Activated B cell treated with CpG ODN at 0.5 μM for 24 hours (primary cell): ENCODE measurements at regions of chr19 and their contacts with region 1.

Region 1: GRCh38 chr19:42529248-42529764 is 1.0 kb upstream of the CEACAM1 start:
- DNase-seq: peak; percentile 68
- ATAC-seq: peak; percentile 87
- H3K4me3 Mint-ChIP-seq: peak overlapping the region; percentile 70
- H3K27ac Mint-ChIP-seq: peak overlapping the region; percentile 80
- H3K4me1 Mint-ChIP-seq: peaks cover 34% of the 10 kb centered on the region
- H3K27me3 Mint-ChIP-seq: no peaks in the 10 kb centered on the region
- CTCF ChIP-seq: peak; percentile 63

Region 2: DNA sequence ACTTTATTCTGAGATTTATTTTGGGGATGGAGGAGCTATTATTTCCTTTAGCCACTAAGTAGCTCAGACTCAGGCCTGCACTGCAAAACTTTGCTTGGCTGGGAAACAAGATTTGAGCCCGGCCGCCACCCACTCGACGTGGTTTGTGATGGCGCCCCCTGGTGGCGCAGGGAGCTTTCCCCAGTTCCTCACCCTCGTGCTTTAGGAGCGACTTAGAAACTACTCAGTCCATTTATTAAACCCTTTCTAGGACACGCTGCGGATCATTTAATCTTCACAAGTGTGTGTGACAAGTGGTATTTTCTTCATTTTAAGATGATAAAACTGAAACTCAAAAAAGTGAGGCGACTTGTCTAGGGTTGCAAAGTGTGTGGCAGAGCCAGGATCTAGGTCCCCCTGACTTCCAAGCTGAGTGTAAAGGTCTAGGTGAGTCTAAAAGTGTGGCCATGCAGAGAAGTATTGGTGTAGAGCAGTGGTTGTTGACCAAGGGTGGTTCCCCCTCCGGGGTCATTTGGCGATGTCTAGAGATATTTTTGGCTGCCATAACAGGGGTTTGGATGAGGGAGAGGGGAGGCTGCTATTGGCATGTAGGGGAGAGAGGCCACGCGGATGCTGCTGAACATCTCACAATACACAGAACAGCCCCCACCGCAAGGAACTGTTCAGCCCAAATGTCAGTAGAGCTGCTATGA is 88.8 kb before region 1 on chr19:
- CTCF ChIA-PET with region 1: interaction called, 23 read pairs
- POLR2A ChIA-PET with region 1: no interaction called
- intact Hi-C with region 1: no loop called
- DNase-seq: peak; percentile 68
- ATAC-seq: peak; percentile 60
- H3K4me3 Mint-ChIP-seq: no peak overlapping the region
- H3K27ac Mint-ChIP-seq: no peak overlapping the region
- H3K4me1 Mint-ChIP-seq: peaks cover 10% of the 10 kb centered on the region
- H3K27me3 Mint-ChIP-seq: peaks cover 3% of the 10 kb centered on the region
- CTCF ChIP-seq: peak; percentile 56

Region 3: DNA sequence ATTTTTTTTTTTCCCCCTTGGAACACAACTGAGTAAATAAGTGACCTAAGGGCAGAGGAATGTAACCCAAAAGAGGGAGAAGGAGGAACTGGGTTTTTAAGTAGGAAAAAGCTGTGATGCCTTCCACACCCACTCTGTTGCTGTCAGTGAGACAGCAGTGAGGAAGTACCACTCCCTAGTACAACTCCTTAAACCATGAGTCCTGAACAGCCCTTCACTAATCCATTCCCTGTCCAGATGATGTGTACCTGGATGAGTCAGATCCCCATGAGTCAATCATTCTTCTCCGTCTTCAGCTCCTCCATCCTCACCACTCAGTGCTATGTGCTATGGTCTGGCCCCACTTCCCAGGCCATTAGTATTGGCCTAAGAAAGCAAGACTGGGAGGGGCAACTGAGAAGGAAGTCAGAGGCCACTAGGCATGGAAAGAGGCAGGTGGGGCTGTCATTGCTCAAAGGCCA is 73.7 kb before region 1 on chr19:
- CTCF ChIA-PET with region 1: interaction called, 142 read pairs
- POLR2A ChIA-PET with region 1: interaction called, 30 read pairs
- intact Hi-C with region 1: loop called (anchors 1 kb)
- DNase-seq: no peak
- ATAC-seq: no peak
- H3K4me3 Mint-ChIP-seq: no peak overlapping the region
- H3K27ac Mint-ChIP-seq: no peak overlapping the region
- H3K4me1 Mint-ChIP-seq: peaks cover 23% of the 10 kb centered on the region
- H3K27me3 Mint-ChIP-seq: peaks cover 2% of the 10 kb centered on the region
- CTCF ChIP-seq: no peak

Region 4: DNA sequence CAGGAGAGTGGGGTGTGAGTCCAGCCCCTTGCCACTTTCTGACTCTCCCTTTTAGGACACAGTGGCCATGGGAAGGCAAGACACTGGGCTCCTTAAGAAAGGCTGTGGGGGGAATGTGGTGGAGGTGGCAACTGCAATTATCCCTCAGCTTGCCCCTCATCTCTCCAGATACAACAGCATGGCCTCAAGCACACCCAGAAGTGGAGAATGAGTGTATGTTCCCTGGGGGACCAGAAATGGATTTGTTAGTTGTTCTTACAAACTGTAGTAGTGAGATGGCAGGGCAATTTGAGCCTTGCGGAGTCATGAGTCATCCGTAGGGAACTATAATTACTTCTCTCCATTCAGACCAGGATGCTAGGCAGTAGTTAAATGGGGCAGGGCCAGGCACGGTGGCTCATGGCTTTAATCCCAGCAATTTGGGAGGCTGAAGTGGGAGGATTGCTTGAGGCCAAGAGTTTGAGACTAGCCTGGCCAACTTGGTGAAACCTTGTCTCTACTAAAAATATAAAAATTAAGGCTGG is 61.0 kb before region 1 on chr19:
- CTCF ChIA-PET with region 1: interaction called, 78 read pairs
- POLR2A ChIA-PET with region 1: interaction called, 43 read pairs
- intact Hi-C with region 1: loop called (anchors 1 kb)
- DNase-seq: no peak
- ATAC-seq: no peak
- H3K4me3 Mint-ChIP-seq: no peak overlapping the region
- H3K27ac Mint-ChIP-seq: no peak overlapping the region
- H3K4me1 Mint-ChIP-seq: peaks cover 53% of the 10 kb centered on the region
- H3K27me3 Mint-ChIP-seq: no peaks in the 10 kb centered on the region
- CTCF ChIP-seq: no peak

Region 5: GRCh38 chr19:42512743-42513304 is 16.5 kb before region 1 on chr19:
- CTCF ChIA-PET with region 1: interaction called, 11 read pairs
- POLR2A ChIA-PET with region 1: no interaction called
- intact Hi-C with region 1: loop called (anchors 2 kb)
- DNase-seq: no peak
- ATAC-seq: peak; percentile 53
- H3K4me3 Mint-ChIP-seq: peak overlapping the region; percentile 49
- H3K27ac Mint-ChIP-seq: peak overlapping the region; percentile 19
- H3K4me1 Mint-ChIP-seq: peaks cover 30% of the 10 kb centered on the region
- H3K27me3 Mint-ChIP-seq: no peaks in the 10 kb centered on the region
- CTCF ChIP-seq: no peak